Heart left ventricle (tissue), 16 donors: ENCODE measurements at regions of chr5 and their contacts with region 1.

Region 1: DNA sequence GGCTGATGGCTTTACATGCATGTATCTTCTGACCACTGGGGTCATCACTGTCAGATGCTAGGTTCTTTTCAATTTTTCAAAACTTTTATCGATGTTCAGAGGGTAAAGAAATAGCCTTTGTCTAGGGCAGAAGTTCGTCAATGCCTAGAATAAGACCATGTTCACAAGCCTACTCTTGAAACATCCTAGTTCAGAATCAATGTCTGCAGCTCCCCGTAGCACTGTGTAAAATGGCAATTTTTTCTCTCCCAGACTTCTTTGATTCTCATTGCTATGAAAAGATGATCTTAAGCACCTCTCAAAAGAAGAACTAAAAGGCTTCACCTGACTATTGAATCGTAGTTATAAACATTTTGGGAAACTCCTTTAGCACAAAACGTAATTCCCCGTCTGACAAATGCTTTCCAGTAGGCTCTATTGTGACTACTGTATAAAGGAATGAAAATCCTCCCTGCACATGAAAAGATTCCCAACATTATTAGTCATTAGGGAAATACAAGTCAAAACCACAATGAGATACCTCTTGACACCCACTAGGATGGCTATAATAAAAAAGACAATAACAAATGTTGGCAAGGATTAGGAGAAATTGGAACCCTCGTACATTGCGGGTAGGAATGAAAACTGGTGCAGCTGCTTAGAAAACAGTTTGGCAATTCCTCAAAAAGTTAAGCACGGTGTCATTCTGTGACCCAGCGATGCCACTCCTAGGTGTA is 263.5 kb downstream of the ARHGAP26 start:
- DNase-seq: no peak
- ATAC-seq: no peak
- H3K4me3 ChIP-seq: no peak overlapping the region
- H3K27ac ChIP-seq: no peak overlapping the region
- H3K4me1 ChIP-seq: peaks cover 0 to 21% (median 0%) of the 10 kb centered on the region in 12 donors
- H3K27me3 ChIP-seq: no peaks in the 10 kb centered on the region
- CTCF ChIP-seq: no peak
- POLR2A ChIP-seq: no peak

Region 2: DNA sequence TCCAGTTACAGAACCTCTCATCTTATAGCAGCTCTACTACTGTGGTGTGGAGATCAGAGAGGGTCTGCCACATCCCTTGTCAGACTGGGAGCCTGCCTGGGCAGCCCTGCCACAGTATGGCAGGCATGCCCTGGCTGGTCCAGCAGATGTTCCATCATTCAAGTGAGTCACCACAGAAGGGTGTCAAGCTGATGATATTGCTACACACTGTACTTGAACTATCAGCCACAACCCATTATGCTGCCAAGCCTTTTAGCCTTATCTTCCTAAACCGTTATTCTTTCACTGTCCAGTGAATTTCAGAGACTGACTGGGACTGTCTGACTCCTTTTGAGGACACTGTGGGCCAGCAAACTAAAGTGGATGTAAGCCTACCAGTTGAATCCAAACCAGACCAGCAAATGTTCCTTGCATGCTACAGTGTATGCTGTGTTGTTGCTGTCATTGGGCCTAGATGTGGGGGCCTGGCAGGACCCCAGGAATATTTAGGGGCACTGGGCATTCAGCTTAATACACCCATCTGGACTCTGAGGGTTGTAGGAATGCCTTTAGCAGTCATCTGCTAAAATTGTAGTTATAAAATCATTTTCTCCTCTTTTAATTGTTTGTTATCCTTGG is 167.2 kb after region 1 on chr5:
- intact Hi-C with region 1: loop called in 1 of 10 experiments (anchors 10 kb)
- DNase-seq: peak in 4 of 5 donors; percentile 56 to 73 (median 68)
- ATAC-seq: peak; percentile 96 to 99 (median 98)
- H3K4me3 ChIP-seq: no peak overlapping the region
- H3K27ac ChIP-seq: peak overlapping the region in 7 of 12 donors; percentile 19 to 58 (median 45)
- H3K4me1 ChIP-seq: peaks cover 0 to 61% (median 33%) of the 10 kb centered on the region in 12 donors
- H3K27me3 ChIP-seq: no peaks in the 10 kb centered on the region
- CTCF ChIP-seq: no peak
- POLR2A ChIP-seq: no peak